CD8-positive, alpha-beta T cell (primary cell): ENCODE measurements at regions of chr5 and their contacts with region 1.

Region 1: DNA sequence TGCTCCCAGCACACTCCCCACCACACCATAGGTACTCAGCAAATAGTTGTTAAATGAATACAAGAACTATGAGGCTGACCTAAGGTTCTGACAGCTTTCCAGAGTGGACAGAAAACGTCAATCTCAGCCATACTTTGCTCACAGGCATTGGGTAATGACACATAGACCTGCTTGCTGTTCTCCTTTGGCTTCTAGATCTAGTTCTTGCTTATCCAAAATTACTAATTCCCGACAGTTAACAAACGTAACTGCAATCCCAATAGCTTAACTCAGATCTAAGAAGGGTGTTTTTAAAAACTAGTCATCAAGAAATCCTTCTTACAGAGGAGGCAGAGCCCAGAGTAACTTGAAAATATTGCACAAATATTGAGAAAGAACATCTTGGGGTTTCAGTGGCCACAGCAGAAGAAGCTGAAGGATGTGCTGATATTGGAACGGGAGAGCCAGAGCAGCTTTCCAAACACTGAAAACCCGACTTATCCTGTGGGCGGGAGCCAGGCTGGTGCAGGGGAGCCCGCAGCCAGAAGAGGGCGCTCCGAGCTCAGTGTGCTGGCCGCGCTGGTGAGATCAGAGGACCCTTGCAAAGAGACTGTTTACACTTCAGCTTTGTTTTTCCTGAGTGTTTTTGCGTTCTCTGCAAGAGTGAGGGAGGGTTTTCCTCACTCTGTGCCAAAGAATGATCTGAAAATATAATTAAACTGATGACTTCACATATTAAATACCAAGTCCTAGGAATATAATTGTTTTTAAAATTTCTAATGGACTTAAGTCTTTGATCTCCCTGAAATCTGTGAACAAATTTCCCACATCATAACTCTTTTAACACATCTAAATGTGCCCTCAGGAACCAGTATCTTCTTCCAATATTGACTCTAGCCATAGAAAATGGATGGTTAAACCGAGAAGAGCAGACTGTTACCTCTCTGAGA is 30.3 kb downstream of the FGF1 start:
- DNase-seq: peak; percentile 36 to 79 (median 69)
- ATAC-seq: peak; percentile 89
- H3K4me3 ChIP-seq: no peak overlapping the region
- H3K4me3 Mint-ChIP-seq: no peak overlapping the region
- H3K27ac ChIP-seq: no peak overlapping the region
- H3K27ac Mint-ChIP-seq: no peak overlapping the region
- H3K4me1 ChIP-seq: no peaks in the 10 kb centered on the region
- H3K4me1 Mint-ChIP-seq: peaks cover 3% of the 10 kb centered on the region
- H3K27me3 ChIP-seq: no peaks in the 10 kb centered on the region
- H3K27me3 Mint-ChIP-seq: peaks cover 16% of the 10 kb centered on the region
- CTCF ChIP-seq: peak; percentile 97

Region 2: GRCh38 chr5:142512043-142513042 is 143.3 kb before region 1 on chr5:
- CTCF ChIA-PET with region 1: no interaction called
- POLR2A ChIA-PET with region 1: no interaction called
- intact Hi-C with region 1: no loop called
- DNase-seq: no peak
- ATAC-seq: no peak
- H3K4me3 ChIP-seq: no peak overlapping the region
- H3K4me3 Mint-ChIP-seq: no peak overlapping the region
- H3K27ac ChIP-seq: no peak overlapping the region
- H3K27ac Mint-ChIP-seq: no peak overlapping the region
- H3K4me1 ChIP-seq: no peaks in the 10 kb centered on the region
- H3K4me1 Mint-ChIP-seq: peaks cover 7% of the 10 kb centered on the region
- H3K27me3 ChIP-seq: no peaks in the 10 kb centered on the region
- H3K27me3 Mint-ChIP-seq: no peaks in the 10 kb centered on the region
- CTCF ChIP-seq: no peak

Region 3: GRCh38 chr5:142644640-142645361 is 10.8 kb before region 1 on chr5:
- CTCF ChIA-PET with region 1: interaction called, 13 read pairs
- POLR2A ChIA-PET with region 1: no interaction called
- intact Hi-C with region 1: no loop called
- DNase-seq: no peak
- ATAC-seq: no peak
- H3K4me3 ChIP-seq: no peak overlapping the region
- H3K4me3 Mint-ChIP-seq: no peak overlapping the region
- H3K27ac ChIP-seq: no peak overlapping the region
- H3K27ac Mint-ChIP-seq: no peak overlapping the region
- H3K4me1 ChIP-seq: no peaks in the 10 kb centered on the region
- H3K4me1 Mint-ChIP-seq: no peaks in the 10 kb centered on the region
- H3K27me3 ChIP-seq: no peaks in the 10 kb centered on the region
- H3K27me3 Mint-ChIP-seq: peaks cover 8% of the 10 kb centered on the region
- CTCF ChIP-seq: no peak

Region 4: DNA sequence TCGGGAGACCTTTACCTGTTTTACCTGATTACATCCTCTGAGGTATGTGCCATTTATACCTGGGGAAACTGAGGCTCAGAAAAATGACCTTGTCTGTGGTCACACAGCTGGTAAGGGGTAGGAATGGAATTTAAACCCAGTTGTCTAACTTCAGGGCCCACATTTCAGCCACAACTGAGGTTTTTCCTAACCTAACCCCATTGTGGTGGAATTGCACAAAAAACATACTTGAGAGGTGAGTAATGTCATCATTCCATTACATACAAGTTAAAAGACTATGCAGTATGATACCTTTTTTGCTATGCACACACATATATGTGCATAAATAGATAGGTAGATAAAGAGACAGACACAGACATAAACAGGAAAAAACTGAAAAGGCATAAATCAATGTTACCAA is 16.2 kb after region 1 on chr5:
- CTCF ChIA-PET with region 1: interaction called, 11 read pairs
- POLR2A ChIA-PET with region 1: no interaction called
- intact Hi-C with region 1: no loop called
- DNase-seq: no peak
- ATAC-seq: no peak
- H3K4me3 ChIP-seq: no peak overlapping the region
- H3K4me3 Mint-ChIP-seq: no peak overlapping the region
- H3K27ac ChIP-seq: no peak overlapping the region
- H3K27ac Mint-ChIP-seq: no peak overlapping the region
- H3K4me1 ChIP-seq: no peaks in the 10 kb centered on the region
- H3K4me1 Mint-ChIP-seq: no peaks in the 10 kb centered on the region
- H3K27me3 ChIP-seq: no peaks in the 10 kb centered on the region
- H3K27me3 Mint-ChIP-seq: peaks cover 2% of the 10 kb centered on the region
- CTCF ChIP-seq: no peak

Region 5: GRCh38 chr5:142692321-142692894 is 36.8 kb after region 1 on chr5:
- CTCF ChIA-PET with region 1: interaction called, 56 read pairs
- POLR2A ChIA-PET with region 1: no interaction called
- intact Hi-C with region 1: no loop called
- DNase-seq: no peak
- ATAC-seq: no peak
- H3K4me3 ChIP-seq: no peak overlapping the region
- H3K4me3 Mint-ChIP-seq: no peak overlapping the region
- H3K27ac ChIP-seq: no peak overlapping the region
- H3K27ac Mint-ChIP-seq: no peak overlapping the region
- H3K4me1 ChIP-seq: no peaks in the 10 kb centered on the region
- H3K4me1 Mint-ChIP-seq: no peaks in the 10 kb centered on the region
- H3K27me3 ChIP-seq: peaks cover 0 to 2% of the 10 kb centered on the region in 2 experiments
- H3K27me3 Mint-ChIP-seq: peaks cover 10% of the 10 kb centered on the region
- CTCF ChIP-seq: no peak

Region 6: GRCh38 chr5:142777850-142778249 is 122.2 kb after region 1 on chr5:
- CTCF ChIA-PET with region 1: no interaction called
- POLR2A ChIA-PET with region 1: no interaction called
- intact Hi-C with region 1: no loop called
- DNase-seq: no peak
- ATAC-seq: no peak
- H3K4me3 ChIP-seq: no peak overlapping the region
- H3K4me3 Mint-ChIP-seq: no peak overlapping the region
- H3K27ac ChIP-seq: no peak overlapping the region
- H3K27ac Mint-ChIP-seq: peak overlapping the region; percentile 5
- H3K4me1 ChIP-seq: peaks cover 27% of the 10 kb centered on the region
- H3K4me1 Mint-ChIP-seq: peaks cover 81% of the 10 kb centered on the region
- H3K27me3 ChIP-seq: no peaks in the 10 kb centered on the region
- H3K27me3 Mint-ChIP-seq: no peaks in the 10 kb centered on the region
- CTCF ChIP-seq: no peak